HepG2 (cell line): ENCODE measurements at regions of chr13 and their contacts with region 1.

Region 1: GRCh38 chr13:60335531-60335930 is 61.5 kb upstream of the TDRD3 start:
- DNase-seq: peak; percentile 3
- ATAC-seq: no peak
- H3K4me3 ChIP-seq: no peak overlapping the region
- H3K27ac ChIP-seq: no peak overlapping the region
- H3K4me1 ChIP-seq: no peaks in the 10 kb centered on the region
- H3K27me3 ChIP-seq: 0 out of 5 replicates have a peak, but pooled peaks cover 0 to 3% of the 10 kb centered on the region in 2 experiments
- CTCF ChIP-seq: peak; percentile 33
- EP300 ChIP-seq: no peak
- POLR2A ChIP-seq: no peak
- RAD21 ChIP-seq: no peak

Region 2: DNA sequence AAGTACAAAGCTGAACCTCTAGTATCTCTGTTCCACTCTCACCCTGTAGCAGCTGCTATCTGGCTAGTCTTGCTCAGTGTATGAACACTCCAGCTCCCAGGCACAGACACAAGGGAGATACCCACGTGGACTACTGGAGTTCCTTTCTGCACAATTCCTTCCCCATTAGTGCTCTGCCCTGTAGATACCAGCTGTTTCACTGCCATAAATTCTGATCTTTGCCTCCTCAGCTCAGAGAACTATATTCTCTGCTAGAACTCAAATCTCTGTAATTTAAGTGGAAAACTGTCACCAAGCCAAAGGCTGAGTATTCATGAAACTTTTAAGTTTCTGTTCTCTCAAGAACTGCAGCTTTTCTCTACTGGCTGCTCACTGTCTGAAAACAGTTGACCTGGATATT is 445.5 kb before region 1 on chr13:
- CTCF ChIA-PET with region 1: no interaction called
- POLR2A ChIA-PET with region 1: no interaction called
- in situ Hi-C with region 1: no loop called
- intact Hi-C with region 1: no loop called
- DNase-seq: no peak
- ATAC-seq: no peak
- H3K4me3 ChIP-seq: no peak overlapping the region
- H3K27ac ChIP-seq: no peak overlapping the region
- H3K4me1 ChIP-seq: no peaks in the 10 kb centered on the region
- H3K27me3 ChIP-seq: no peaks in the 10 kb centered on the region
- CTCF ChIP-seq: no peak
- EP300 ChIP-seq: no peak
- POLR2A ChIP-seq: no peak
- RAD21 ChIP-seq: no peak

Region 3: DNA sequence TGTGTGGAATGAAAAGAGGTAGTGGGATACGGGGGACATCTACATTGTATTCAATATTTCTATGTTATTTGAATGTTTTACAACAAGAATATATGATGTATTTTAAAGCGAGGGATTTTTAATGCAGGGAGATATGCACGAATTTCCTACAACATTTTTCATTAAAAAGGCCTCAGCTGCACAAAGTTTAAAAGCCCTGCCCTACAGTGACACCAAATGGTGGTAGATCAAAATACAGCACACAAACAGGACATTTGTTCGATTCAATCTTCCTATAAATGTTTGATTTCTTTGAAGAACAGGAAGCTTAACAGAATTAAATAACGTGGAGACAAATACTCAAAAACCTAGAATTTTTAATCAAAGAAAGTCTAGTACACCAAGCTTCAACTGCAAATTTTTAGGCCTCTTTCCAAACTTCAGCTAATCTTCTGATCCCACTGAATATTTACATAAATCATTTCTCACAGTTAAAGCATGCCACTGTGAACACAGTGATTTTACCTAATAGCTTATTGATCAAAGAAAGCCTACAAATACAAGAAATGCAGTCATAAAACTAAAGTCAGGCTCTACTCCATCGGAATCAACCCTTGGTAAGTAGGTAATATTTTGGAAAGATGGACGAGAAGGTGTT is 429.0 kb before region 1 on chr13:
- CTCF ChIA-PET with region 1: no interaction called
- POLR2A ChIA-PET with region 1: no interaction called
- in situ Hi-C with region 1: no loop called
- intact Hi-C with region 1: loop called (anchors 10 kb)
- DNase-seq: peak; percentile 1
- ATAC-seq: peak; percentile 47; the same call in 2 of the 3 replicates
- H3K4me3 ChIP-seq: no peak overlapping the region
- H3K27ac ChIP-seq: no peak overlapping the region
- H3K4me1 ChIP-seq: no peaks in the 10 kb centered on the region
- H3K27me3 ChIP-seq: no peaks in the 10 kb centered on the region
- CTCF ChIP-seq: peak; percentile 60
- EP300 ChIP-seq: no peak
- POLR2A ChIP-seq: no peak
- RAD21 ChIP-seq: 0 out of 2 replicates have a peak, but pooled peaks have one; percentile 18

Region 4: GRCh38 chr13:60431108-60431700 is 95.7 kb after region 1 on chr13:
- CTCF ChIA-PET with region 1: interaction called, 3 read pairs
- POLR2A ChIA-PET with region 1: no interaction called
- in situ Hi-C with region 1: no loop called
- intact Hi-C with region 1: loop called (anchors 1 kb)
- DNase-seq: peak; percentile 47
- ATAC-seq: peak; percentile 80
- H3K4me3 ChIP-seq: no peak overlapping the region
- H3K27ac ChIP-seq: no peak overlapping the region
- H3K4me1 ChIP-seq: no peaks in the 10 kb centered on the region
- H3K27me3 ChIP-seq: no peaks in the 10 kb centered on the region
- CTCF ChIP-seq: peak; percentile 72
- EP300 ChIP-seq: no peak
- POLR2A ChIP-seq: no peak
- RAD21 ChIP-seq: peak; percentile 58; the same call in 1 of the 2 replicates